A673 (cell line): ENCODE measurements at regions of chr11 and their contacts with region 1.

Region 1: DNA sequence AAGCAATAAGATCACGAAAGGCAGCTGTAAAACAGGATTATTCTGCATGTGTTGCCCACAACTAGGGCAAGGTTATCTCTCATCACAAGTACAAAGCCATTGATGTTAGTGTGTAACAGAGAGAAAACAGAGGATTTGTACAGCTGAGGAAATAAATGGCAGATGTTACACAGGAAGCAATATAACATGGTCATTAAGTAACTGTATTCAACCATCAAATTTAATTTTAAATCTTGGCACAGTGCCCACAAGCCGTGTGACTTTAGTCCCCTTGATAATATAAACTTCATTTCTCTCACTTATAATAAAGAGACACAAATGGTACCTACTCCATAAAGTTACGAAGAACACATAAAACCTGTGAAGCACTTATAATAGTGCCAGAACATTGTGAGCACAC is 17.3 kb downstream of the OR51E2 start:
- DNase-seq: peak; percentile 82
- H3K4me3 ChIP-seq: no peak overlapping the region
- H3K27ac ChIP-seq: no peak overlapping the region
- H3K4me1 ChIP-seq: peaks cover 20% of the 10 kb centered on the region
- H3K27me3 ChIP-seq: no peaks in the 10 kb centered on the region
- CTCF ChIP-seq: no peak

Region 2: GRCh38 chr11:4699697-4700435 is 19.5 kb after region 1 on chr11:
- CTCF ChIA-PET with region 1: no interaction called
- POLR2A ChIA-PET with region 1: no interaction called
- intact Hi-C with region 1: loop called (anchors 2 kb)
- DNase-seq: no peak
- H3K4me3 ChIP-seq: no peak overlapping the region
- H3K27ac ChIP-seq: no peak overlapping the region
- H3K4me1 ChIP-seq: peaks cover 14% of the 10 kb centered on the region
- H3K27me3 ChIP-seq: no peaks in the 10 kb centered on the region
- CTCF ChIP-seq: no peak